Caco-2 (cell line): ENCODE measurements at regions of chr4 and their contacts with region 1.

Region 1: DNA sequence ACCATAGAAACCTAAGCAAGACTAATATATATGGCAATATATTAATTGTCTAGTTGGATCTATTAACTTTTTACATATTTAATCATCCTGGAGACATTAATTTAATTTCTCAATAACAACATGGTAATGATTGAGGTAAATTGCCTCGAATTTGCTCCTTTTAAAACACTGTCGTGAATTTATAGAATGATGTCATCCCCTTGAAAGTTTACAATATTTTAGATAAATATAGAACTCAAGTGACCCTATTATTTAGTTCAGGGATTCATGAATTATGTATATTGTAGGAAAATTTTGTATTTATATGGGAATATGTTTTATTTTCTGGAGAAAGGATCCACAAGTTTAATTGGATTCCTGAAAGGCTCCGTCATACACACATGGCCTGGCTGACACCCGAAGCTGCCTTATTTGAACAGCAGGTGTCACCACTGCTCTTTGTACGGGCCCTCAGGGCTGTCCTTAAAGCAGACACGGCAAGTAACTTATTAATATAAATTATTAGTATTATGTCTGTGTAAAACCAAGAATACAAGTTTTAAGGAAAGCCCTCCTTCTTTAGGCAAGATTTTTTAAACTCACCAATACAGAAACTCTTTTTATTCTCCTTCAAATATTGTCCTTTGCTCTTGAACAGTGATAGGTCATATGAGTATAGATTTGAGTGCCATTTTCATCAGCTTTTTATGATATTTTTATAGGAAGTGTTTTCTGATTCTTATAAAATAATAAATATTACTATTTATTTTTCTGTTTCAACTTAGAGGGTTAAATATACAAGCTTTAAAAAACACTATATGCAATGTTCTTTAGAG is 1.9 kb upstream of the PLRG1 start:
- DNase-seq: peak; percentile 71 to 79
- H3K4me3 ChIP-seq: no peak overlapping the region
- H3K4me3 Mint-ChIP-seq: no peak overlapping the region
- H3K27ac Mint-ChIP-seq: no peak overlapping the region
- H3K4me1 ChIP-seq: 0 out of 2 replicates have a peak, but pooled peaks cover 4% of the 10 kb centered on the region
- H3K4me1 Mint-ChIP-seq: peaks cover 18% of the 10 kb centered on the region
- H3K27me3 ChIP-seq: no peaks in the 10 kb centered on the region; the same call in 1 of the 2 replicates
- H3K27me3 Mint-ChIP-seq: no peaks in the 10 kb centered on the region
- CTCF ChIP-seq: peak; percentile 70 to 78

Region 2: DNA sequence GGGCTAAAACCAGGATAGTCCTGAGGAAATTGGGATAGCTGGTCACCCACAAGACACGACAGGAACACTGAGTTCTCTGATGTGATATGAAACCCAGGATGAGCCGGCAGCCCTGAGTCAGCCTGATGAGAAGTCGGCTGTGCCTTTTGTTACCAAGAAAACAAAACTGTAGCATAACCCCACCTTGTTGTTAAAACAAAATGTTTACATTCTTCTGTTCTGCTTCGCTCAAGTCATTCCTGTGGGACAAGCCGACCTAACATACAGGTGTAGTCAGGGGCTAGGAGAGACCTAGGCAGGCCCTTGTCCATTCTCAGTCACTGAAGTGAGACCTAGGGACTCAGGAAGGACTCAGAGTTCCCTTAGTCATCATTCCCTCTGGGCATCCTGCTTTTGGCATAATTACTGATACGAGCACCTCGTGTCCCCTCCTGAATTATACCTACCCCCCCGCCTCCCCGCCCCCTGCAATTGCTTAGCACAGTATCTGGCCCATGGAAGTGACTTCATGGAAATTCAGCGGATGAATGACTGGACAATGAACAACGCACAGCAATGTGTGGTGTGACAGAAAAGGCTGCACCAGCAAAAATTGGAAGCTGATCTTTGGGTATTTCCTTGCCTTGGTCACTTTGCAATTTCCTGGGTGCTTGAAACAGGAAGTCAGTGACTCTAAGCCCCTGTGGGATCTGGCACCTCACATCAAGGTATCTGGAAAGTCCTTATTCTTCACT is 899.9 kb before region 1 on chr4:
- CTCF ChIA-PET with region 1: interaction called, 12 read pairs
- POLR2A ChIA-PET with region 1: no interaction called
- intact Hi-C with region 1: no loop called
- DNase-seq: no peak
- H3K4me3 ChIP-seq: no peak overlapping the region
- H3K4me3 Mint-ChIP-seq: no peak overlapping the region
- H3K27ac Mint-ChIP-seq: no peak overlapping the region
- H3K4me1 ChIP-seq: no peaks in the 10 kb centered on the region
- H3K4me1 Mint-ChIP-seq: no peaks in the 10 kb centered on the region
- H3K27me3 ChIP-seq: no peaks in the 10 kb centered on the region
- H3K27me3 Mint-ChIP-seq: peaks cover 3% of the 10 kb centered on the region
- CTCF ChIP-seq: no peak

Region 3: DNA sequence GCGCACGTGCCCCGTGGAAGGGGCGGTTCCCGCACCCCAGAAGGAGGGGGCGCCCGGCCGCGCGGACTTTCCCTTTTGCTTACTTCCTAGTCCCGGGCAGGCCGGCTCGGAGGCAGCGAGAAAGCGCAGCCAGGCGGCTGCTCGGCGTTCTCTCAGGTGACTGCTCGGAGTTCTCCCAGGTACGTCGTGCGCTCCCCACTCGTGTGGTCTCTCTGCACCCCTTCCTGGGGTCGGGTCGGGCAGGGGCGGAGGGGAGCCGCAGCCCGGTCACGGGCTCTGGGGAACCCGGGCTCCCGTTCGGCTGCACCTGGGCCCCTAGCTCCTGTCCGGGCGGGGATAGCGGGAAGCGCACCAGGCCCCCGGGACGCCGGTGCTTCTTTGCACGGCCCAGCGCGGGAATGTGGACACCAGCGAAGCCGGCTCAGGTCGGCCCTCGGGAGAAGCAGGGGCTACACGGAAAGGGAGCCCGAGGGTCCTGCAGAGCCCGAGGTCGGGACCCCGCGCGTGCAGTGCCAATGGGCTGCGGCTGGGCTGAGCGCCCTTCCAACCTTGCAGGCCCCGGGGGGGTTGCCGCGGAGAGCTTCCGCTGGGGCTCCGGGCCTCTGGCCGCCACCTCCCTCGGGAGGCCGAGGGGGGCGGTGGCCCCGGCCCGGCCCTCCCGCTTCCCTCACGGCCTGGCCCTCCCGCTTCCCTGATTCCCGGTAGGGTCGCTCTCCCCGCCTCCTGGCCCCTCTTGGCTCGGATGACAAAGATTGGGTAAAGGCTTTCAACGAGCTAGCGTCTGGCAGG is 867.7 kb before region 1 on chr4 and contains the start of gene TLR2:
- CTCF ChIA-PET with region 1: no interaction called
- POLR2A ChIA-PET with region 1: interaction called, 12 read pairs
- intact Hi-C with region 1: no loop called
- DNase-seq: peak; percentile 68 to 72
- H3K4me3 ChIP-seq: peak within 1 kb of the TSS; percentile 49
- H3K4me3 Mint-ChIP-seq: peak within 1 kb of the TSS; percentile 77
- H3K27ac Mint-ChIP-seq: no peak within 1 kb of the TSS
- H3K4me1 ChIP-seq: no peaks in the 10 kb centered on the region
- H3K4me1 Mint-ChIP-seq: peaks cover 8% of the 10 kb centered on the region
- H3K27me3 ChIP-seq: no peaks in the 10 kb centered on the region
- H3K27me3 Mint-ChIP-seq: no peaks in the 10 kb centered on the region
- CTCF ChIP-seq: peak in 1 of 2 experiments; percentile 7
- total RNA-seq, gene TLR2: 7.8 and 11.0 TPM in 2 replicates

Region 4: GRCh38 chr4:154490583-154491340 is 61.3 kb before region 1 on chr4:
- CTCF ChIA-PET with region 1: no interaction called
- POLR2A ChIA-PET with region 1: no interaction called
- intact Hi-C with region 1: no loop called
- DNase-seq: no peak
- H3K4me3 ChIP-seq: no peak overlapping the region
- H3K4me3 Mint-ChIP-seq: peak overlapping the region; percentile 73
- H3K27ac Mint-ChIP-seq: no peak overlapping the region
- H3K4me1 ChIP-seq: no peaks in the 10 kb centered on the region
- H3K4me1 Mint-ChIP-seq: no peaks in the 10 kb centered on the region
- H3K27me3 ChIP-seq: no peaks in the 10 kb centered on the region
- H3K27me3 Mint-ChIP-seq: peaks cover 16% of the 10 kb centered on the region
- CTCF ChIP-seq: no peak

Region 5: DNA sequence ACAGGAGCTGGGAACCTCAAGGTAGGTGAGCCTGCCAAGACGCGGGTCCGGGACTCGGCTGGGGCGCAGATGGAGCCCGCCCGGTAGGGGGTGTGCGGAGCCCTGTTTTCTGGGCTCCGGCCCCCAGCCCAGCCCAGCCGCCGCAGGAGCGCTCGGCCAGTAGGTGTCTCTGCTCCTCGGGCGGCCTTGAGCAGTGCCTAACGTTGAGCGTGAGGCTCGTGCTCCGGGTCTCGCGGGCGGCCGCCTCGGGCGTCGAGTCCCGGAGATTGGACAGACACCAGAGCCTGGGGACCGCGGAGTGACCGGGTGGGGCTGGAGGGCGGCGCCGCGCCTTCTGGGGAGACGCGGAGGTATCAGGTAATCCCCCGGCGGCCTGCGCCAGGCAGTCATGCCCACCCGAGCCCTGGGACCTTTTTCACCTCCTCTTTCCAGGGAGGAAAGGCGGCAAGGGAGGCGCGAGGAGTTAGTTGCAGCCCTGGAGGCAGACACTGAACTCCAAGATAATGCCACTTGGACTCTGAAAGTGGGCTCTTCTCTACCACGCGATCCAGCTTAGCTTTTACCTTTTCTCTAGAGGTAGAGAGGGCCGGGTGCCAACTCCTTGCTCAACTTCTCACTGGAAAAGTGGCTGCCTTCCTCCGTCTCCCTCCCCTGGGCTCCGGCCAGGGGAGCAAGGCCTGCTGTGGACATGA is 74.9 kb after region 1 on chr4:
- CTCF ChIA-PET with region 1: interaction called, 18 read pairs
- POLR2A ChIA-PET with region 1: no interaction called
- intact Hi-C with region 1: loop called (anchors 1 kb)
- DNase-seq: peak; percentile 85 to 88
- H3K4me3 ChIP-seq: peak overlapping the region; percentile 41
- H3K4me3 Mint-ChIP-seq: no peak overlapping the region
- H3K27ac Mint-ChIP-seq: no peak overlapping the region
- H3K4me1 ChIP-seq: peaks cover 6% of the 10 kb centered on the region
- H3K4me1 Mint-ChIP-seq: peaks cover 9% of the 10 kb centered on the region
- H3K27me3 ChIP-seq: no peaks in the 10 kb centered on the region; the same call in 1 of the 2 replicates
- H3K27me3 Mint-ChIP-seq: peaks cover 4% of the 10 kb centered on the region
- CTCF ChIP-seq: peak; percentile 79 to 95

Region 6: DNA sequence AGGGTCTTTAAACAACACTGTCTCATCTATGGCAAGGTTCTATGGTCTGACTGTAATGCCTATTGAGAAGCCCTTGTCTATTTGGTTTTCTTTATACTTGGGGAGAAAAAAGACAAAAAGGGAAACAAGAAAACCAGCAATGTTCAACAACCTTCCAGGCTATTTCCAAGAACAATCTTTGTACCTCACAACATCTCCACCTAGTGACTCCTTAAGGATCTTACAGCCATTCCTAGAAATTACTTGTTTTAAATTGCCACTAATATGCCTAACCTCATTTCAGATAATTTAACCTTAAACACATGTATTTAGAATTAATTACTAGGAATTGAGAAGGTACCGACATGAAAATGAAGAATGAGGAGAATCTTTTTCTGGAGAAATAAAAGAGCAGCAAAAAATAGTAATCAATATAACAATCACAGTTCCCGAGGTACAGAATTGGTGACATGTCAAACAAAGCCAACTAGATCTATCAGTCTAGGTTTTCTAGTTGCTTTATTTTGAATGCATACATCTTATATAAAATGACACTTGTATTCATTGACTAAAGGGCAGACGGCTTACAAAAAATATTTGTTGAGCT is 227.4 kb after region 1 on chr4:
- CTCF ChIA-PET with region 1: interaction called, 3 read pairs
- POLR2A ChIA-PET with region 1: no interaction called
- intact Hi-C with region 1: loop called (anchors 1 kb)
- DNase-seq: peak in 1 of 2 experiments; percentile 4
- H3K4me3 ChIP-seq: no peak overlapping the region
- H3K4me3 Mint-ChIP-seq: no peak overlapping the region
- H3K27ac Mint-ChIP-seq: no peak overlapping the region
- H3K4me1 ChIP-seq: no peaks in the 10 kb centered on the region
- H3K4me1 Mint-ChIP-seq: no peaks in the 10 kb centered on the region
- H3K27me3 ChIP-seq: no peaks in the 10 kb centered on the region; the same call in 1 of the 2 replicates
- H3K27me3 Mint-ChIP-seq: peaks cover 21% of the 10 kb centered on the region
- CTCF ChIP-seq: peak; percentile 56 to 57

Region 7: DNA sequence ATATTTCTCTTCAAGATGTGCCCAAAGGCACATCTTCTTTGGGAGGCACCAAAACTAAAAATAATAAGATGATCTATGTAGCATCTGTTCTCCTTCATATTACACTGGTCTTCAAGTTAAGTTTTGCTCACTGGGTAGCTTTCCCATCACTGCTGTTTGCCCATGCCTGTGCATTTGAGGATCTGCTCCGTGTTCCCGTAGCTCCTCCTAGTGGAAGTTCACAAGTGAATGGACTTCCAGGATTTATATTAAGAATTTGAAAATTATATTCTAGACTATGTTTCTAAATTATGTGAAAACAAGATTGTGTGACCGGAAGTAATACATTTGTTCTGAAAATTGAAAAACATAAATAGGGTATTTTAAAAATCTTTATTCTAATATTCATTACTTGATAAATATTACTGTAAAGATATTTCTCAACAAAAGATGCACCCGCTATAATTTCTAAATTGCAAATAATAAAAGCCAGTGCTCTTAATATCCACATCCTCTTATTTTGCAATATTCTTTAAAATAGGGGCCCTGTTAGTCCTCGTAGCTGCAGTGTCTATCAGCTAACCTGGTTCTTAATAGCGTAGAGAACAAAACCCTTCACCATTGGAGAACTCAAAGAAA is 376.7 kb after region 1 on chr4:
- CTCF ChIA-PET with region 1: no interaction called
- POLR2A ChIA-PET with region 1: no interaction called
- intact Hi-C with region 1: loop called (anchors 5 kb)
- DNase-seq: peak; percentile 16 to 42
- H3K4me3 ChIP-seq: no peak overlapping the region
- H3K4me3 Mint-ChIP-seq: no peak overlapping the region
- H3K27ac Mint-ChIP-seq: no peak overlapping the region
- H3K4me1 ChIP-seq: no peaks in the 10 kb centered on the region
- H3K4me1 Mint-ChIP-seq: no peaks in the 10 kb centered on the region
- H3K27me3 ChIP-seq: no peaks in the 10 kb centered on the region
- H3K27me3 Mint-ChIP-seq: peaks cover 3% of the 10 kb centered on the region
- CTCF ChIP-seq: peak in 1 of 2 experiments; percentile 50